ENCODE measurements at regions of chr10 and their contacts with region 1.

Region 1: DNA sequence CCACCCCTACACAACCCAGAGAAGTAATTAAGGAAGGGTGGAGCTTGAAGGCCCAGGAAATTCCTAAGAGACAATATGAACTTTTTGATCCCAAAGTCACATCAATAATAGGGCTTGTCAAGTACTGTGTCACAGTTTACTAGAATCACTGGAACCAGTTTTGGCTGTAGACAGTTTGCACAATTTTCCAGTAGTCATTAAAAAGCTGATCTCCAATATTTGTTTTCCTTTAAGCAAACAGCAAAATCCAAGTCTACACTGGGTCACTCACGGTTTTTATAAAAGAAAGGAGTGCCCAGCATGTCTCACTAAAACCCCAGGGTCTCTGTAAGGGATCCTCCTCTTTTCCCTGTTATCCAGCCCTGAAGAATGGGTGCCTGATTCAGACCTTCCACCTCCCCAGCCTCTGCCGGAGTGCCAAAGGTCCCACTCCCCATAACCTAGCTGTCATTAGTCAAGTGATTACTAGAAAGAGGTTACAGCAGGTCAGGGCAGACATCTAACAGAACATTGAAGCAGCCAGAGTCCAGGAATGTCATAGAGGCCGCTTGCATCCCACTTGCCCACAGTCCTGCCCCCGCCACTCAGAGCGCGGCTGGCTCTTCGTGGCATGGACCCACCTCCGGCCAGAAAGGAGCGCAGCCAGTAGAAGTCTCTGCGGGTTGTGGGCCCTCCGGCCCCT is 556 bp downstream of the SLC25A16 start:
- DNase-seq: no peak
- ATAC-seq: no peak
- H3K4me3 Mint-ChIP-seq: peak overlapping the region; percentile 86
- H3K27ac Mint-ChIP-seq: peak overlapping the region; percentile 73
- H3K4me1 Mint-ChIP-seq: peaks cover 14% of the 10 kb centered on the region
- H3K27me3 Mint-ChIP-seq: no peaks in the 10 kb centered on the region
- CTCF ChIP-seq: no peak

Region 2: DNA sequence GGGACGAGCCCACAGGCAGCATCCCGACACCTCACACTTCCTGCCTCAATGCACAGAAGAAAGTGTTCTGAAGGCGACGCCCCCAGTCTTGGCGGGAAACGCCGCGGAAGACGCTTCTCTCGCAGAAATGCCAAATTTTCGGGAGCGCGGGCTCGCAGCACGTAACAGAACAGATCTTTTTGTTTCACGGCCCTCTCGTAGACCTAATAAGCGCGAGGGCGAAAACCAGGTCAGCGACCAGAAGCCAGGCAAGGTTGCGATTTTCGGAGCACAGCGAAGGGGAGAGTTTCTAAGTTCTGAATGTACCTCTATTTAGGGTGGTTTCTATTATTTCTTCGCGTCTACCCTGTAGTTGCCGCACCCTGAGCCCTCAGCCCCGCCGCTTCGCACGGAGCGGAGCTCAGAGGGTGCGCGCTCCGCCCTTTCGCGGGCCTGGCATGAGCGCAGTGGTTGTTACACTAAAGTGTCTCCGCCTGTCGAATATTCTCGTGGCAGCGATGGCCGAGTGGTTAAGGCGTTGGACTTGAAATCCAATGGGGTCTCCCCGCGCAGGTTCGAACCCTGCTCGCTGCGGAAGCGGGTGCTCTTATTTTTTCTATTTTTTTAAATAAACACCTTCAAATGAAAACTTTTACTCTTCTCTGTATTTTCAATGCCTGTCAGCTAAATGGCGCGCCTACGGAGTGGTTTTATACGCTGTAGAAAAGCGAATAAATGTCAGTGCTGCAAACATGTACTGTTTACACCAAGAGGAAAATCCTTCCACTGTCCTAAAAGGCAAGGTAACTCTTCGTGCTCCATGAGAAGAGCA is 762.5 kb before region 1 on chr10:
- CTCF ChIA-PET with region 1: no interaction called
- POLR2A ChIA-PET with region 1: no interaction called
- intact Hi-C with region 1: loop called (anchors 10 kb)
- DNase-seq: peak; percentile 98
- ATAC-seq: peak; percentile 78
- H3K4me3 Mint-ChIP-seq: peak overlapping the region; percentile 94
- H3K27ac Mint-ChIP-seq: peak overlapping the region; percentile 99
- H3K4me1 Mint-ChIP-seq: peaks cover 31% of the 10 kb centered on the region
- H3K27me3 Mint-ChIP-seq: peaks cover 4% of the 10 kb centered on the region
- CTCF ChIP-seq: no peak

Region 3: GRCh38 chr10:68406815-68407548 is 119.8 kb before region 1 on chr10 and contains the start of gene RUFY2:
- CTCF ChIA-PET with region 1: no interaction called
- POLR2A ChIA-PET with region 1: interaction called, 3 read pairs
- intact Hi-C with region 1: loop called (anchors 1 kb)
- DNase-seq: peak; percentile 91
- ATAC-seq: peak; percentile 92
- H3K4me3 Mint-ChIP-seq: peak within 1 kb of the TSS; percentile 92
- H3K27ac Mint-ChIP-seq: peak within 1 kb of the TSS; percentile 85
- H3K4me1 Mint-ChIP-seq: peaks cover 15% of the 10 kb centered on the region
- H3K27me3 Mint-ChIP-seq: no peaks in the 10 kb centered on the region
- CTCF ChIP-seq: no peak
- total RNA-seq, gene RUFY2: 23.1 and 28.5 TPM in 2 replicates

Region 4: DNA sequence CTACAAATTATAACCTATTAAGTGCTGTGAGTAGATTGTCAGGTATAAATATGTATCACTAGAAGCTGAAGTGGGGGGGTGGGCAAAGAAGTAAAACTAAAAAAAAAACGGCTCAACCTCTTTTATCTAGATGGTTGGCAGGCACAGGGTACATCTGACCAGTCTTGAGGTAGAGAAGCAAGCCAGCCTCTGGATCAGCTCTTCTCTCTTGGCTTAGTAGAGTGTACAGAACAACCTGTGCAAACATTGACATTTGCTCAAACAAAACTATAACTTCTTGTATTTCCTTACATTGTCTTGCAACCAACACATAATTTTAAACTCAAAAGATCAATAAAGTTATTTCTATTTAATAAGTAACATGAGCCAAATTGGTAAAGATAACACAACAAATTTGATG is 80.6 kb before region 1 on chr10:
- CTCF ChIA-PET with region 1: no interaction called
- POLR2A ChIA-PET with region 1: no interaction called
- intact Hi-C with region 1: no loop called
- DNase-seq: no peak
- ATAC-seq: no peak
- H3K4me3 Mint-ChIP-seq: no peak overlapping the region
- H3K27ac Mint-ChIP-seq: no peak overlapping the region
- H3K4me1 Mint-ChIP-seq: no peaks in the 10 kb centered on the region
- H3K27me3 Mint-ChIP-seq: no peaks in the 10 kb centered on the region
- CTCF ChIP-seq: no peak

Region 5: GRCh38 chr10:68600041-68600778 is 73.4 kb after region 1 on chr10:
- CTCF ChIA-PET with region 1: no interaction called
- POLR2A ChIA-PET with region 1: no interaction called
- intact Hi-C with region 1: loop called (anchors 1 kb)
- DNase-seq: peak; percentile 31
- ATAC-seq: peak; percentile 79
- H3K4me3 Mint-ChIP-seq: peak overlapping the region; percentile 90
- H3K27ac Mint-ChIP-seq: peak overlapping the region; percentile 83
- H3K4me1 Mint-ChIP-seq: peaks cover 24% of the 10 kb centered on the region
- H3K27me3 Mint-ChIP-seq: no peaks in the 10 kb centered on the region
- CTCF ChIP-seq: no peak

Region 6: GRCh38 chr10:68668231-68668630 is 141.5 kb after region 1 on chr10:
- CTCF ChIA-PET with region 1: no interaction called
- POLR2A ChIA-PET with region 1: no interaction called
- intact Hi-C with region 1: no loop called
- DNase-seq: no peak
- ATAC-seq: no peak
- H3K4me3 Mint-ChIP-seq: no peak overlapping the region
- H3K27ac Mint-ChIP-seq: no peak overlapping the region
- H3K4me1 Mint-ChIP-seq: no peaks in the 10 kb centered on the region
- H3K27me3 Mint-ChIP-seq: no peaks in the 10 kb centered on the region
- CTCF ChIP-seq: no peak

Region 7: DNA sequence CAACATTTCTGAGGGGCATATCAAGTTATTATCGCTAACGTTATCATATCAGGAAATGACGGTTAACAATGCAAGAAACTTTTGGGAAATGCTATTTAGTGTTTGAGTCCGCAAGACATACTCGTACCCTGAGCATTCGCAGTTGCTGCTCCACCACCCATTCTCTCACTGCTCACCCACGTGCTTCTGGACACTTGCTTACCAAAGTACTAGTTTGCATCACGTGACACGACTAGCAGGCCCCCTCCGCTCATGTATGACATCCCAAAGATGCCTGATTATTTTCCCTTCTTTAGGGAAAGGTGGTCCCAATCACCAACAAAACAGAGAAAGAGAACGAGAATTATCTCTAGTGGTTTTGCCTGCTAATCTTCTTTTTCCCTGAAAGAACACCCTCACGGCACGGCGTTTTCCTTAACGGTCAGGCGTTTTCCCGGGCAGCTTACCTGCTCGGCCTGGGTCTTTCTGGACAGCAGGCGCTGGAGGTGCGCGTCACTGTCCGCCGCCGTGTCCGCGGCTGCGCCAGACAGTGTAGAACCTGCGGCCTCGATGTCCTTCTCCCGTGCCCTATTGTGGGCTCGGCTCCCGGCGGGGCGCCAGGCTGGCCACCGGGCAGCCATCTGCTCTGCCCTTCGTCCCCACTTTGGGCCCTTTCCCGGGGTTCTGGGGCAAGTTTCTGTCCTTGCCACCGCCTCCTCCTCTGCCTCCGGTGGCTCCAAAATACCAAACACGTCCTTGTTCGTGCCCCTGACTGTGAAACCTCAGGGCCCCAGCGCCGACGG is 653.2 kb after region 1 on chr10 and contains the start of gene SUPV3L1:
- CTCF ChIA-PET with region 1: no interaction called
- POLR2A ChIA-PET with region 1: no interaction called
- intact Hi-C with region 1: loop called (anchors 1 kb)
- DNase-seq: peak; percentile 87
- ATAC-seq: peak; percentile 87
- H3K4me3 Mint-ChIP-seq: peak within 1 kb of the TSS; percentile 95
- H3K27ac Mint-ChIP-seq: peak within 1 kb of the TSS; percentile 100
- H3K4me1 Mint-ChIP-seq: peaks cover 39% of the 10 kb centered on the region
- H3K27me3 Mint-ChIP-seq: no peaks in the 10 kb centered on the region
- CTCF ChIP-seq: no peak
- total RNA-seq, gene SUPV3L1: 38.7 and 49.1 TPM in 2 replicates

Measured in activated B cell treated with CpG ODN at 0.5 μM for 24 hours (primary cell).